ENCODE measurements at regions of chr2 and their contacts with region 1.

Region 1: DNA sequence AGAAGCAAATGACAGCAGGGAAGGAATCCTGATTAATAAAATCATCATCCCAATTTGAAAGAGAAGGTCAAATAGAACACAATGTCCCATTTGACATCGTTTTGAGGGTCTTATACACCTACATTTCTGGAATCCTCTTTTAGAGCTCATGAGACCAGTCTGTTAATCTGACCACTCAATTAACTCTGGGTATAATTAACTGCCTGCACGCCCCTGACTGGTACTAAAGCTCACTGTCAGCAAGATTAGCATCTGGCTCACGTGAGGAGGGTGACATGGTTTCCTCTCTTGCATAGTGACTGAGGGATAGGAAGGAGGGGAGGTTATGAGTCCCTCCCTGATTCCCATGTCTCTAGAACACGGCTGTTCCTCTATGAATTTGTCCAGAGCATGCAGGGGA is 124.3 kb downstream of the ICOS start:
- DNase-seq: no peak
- H3K4me3 ChIP-seq: no peak overlapping the region
- H3K27ac ChIP-seq: no peak overlapping the region
- H3K4me1 ChIP-seq: no peaks in the 10 kb centered on the region
- H3K27me3 ChIP-seq: no peaks in the 10 kb centered on the region
- CTCF ChIP-seq: no peak

Region 2: GRCh38 chr2:204228169-204228886 is 167.5 kb after region 1 on chr2:
- CTCF ChIA-PET with region 1: no interaction called
- dilution Hi-C with region 1: loop called (anchors 5 kb)
- in situ Hi-C with region 1: no loop called
- intact Hi-C with region 1: no loop called
- DNase-seq: no peak
- H3K4me3 ChIP-seq: no peak overlapping the region
- H3K27ac ChIP-seq: no peak overlapping the region
- H3K4me1 ChIP-seq: no peaks in the 10 kb centered on the region
- H3K27me3 ChIP-seq: peaks cover 5% of the 10 kb centered on the region
- CTCF ChIP-seq: no peak

Region 3: DNA sequence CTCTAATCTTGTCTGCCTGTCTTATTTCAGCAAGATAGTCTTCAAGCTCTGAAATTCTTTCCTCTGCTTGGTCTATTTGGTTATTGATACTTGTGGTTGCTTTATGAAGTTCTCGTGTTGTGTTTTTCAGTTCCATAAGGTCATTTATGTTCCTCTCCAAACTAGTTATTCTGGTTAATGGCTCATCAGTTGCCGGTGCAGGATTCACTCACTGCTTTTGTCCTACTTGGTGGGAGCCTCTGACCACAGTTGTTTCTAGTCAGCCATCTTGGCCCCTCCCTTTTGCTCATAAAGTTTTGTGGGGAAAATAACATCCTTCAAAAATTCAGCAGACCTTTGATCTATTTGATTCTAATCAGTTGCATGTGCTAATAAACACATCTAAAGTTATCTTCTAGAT is 325.8 kb after region 1 on chr2:
- CTCF ChIA-PET with region 1: no interaction called
- dilution Hi-C with region 1: no loop called
- in situ Hi-C with region 1: no loop called
- intact Hi-C with region 1: no loop called
- DNase-seq: no peak
- H3K4me3 ChIP-seq: no peak overlapping the region
- H3K27ac ChIP-seq: no peak overlapping the region
- H3K4me1 ChIP-seq: no peaks in the 10 kb centered on the region
- H3K27me3 ChIP-seq: no peaks in the 10 kb centered on the region
- CTCF ChIP-seq: no peak